Mammary epithelial cell (primary cell): ENCODE measurements at regions of chr3 and their contacts with region 1.

Region 1: DNA sequence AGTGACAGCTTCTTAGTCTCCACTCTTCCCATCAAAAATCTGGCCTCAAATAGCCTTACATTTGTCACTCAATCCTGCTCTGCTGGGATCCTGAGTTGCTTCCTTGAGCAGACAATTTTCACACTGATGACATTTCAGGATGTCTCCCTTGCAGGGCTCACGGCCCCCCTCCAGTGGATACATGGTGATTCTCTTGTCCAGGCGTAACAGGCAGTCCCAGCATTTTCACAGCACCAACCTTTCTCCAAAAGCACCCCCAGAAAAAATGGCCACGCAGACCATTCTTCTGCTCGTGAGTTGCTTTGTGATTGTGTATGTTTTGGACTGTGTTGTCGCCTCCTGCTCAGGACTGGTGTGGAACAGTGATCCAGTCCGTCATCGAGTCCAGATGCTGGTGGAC is 47.4 kb upstream of the WNT7A start:
- DNase-seq: no peak
- H3K4me3 ChIP-seq: no peak overlapping the region
- H3K27ac ChIP-seq: no peak overlapping the region
- H3K4me1 ChIP-seq: no peaks in the 10 kb centered on the region
- H3K27me3 ChIP-seq: no peaks in the 10 kb centered on the region
- CTCF ChIP-seq: peak in 1 of 2 donors; percentile 23

Region 2: DNA sequence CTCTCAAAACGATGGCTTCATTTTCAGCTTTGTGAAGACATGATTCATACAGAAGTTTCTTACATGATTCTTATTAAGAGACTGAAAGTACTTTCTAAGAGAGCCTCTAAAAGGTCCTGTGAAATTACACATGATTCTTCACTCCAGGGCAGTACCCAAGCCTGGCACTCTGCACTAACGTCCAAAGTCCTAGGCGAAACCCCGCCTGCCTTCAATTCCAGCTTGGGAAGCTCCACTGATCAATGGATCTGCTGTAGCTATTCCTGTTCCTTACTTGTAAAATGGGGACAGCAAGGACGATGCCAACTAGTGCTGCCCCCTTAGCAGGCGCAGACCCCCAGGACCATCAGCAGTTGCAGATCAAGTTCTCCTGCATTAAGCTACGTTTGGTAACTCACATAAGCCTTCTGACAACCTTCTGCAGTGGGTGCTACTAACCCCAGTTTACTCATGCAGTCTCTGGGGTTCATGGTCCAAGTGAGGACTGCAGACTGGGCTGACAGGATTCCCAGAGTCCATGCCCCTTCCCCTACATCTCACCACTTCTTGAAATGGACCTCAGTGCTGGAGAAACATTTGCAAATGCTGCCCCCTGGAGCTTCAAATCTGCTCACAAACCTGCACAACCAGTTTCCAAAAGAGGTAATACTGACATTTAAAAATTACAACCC is 186.8 kb after region 1 on chr3:
- CTCF ChIA-PET with region 1: no interaction called
- dilution Hi-C with region 1: loop called (anchors 10 kb)
- in situ Hi-C with region 1: no loop called
- intact Hi-C with region 1: no loop called
- DNase-seq: no peak
- H3K4me3 ChIP-seq: no peak overlapping the region
- H3K27ac ChIP-seq: no peak overlapping the region
- H3K4me1 ChIP-seq: no peaks in the 10 kb centered on the region
- H3K27me3 ChIP-seq: no peaks in the 10 kb centered on the region
- CTCF ChIP-seq: peak; percentile 11 to 48